IMR-90 (cell line): ENCODE measurements at regions of chr4 and their contacts with region 1.

Region 1: GRCh38 chr4:52199574-52200338 is 148.7 kb downstream of the SPATA18 start:
- DNase-seq: peak; percentile 7
- ATAC-seq: no peak
- H3K4me3 ChIP-seq: no peak overlapping the region
- H3K27ac ChIP-seq: no peak overlapping the region
- H3K4me1 ChIP-seq: no peaks in the 10 kb centered on the region
- H3K27me3 ChIP-seq: no peaks in the 10 kb centered on the region
- CTCF ChIP-seq: no peak
- POLR2A ChIP-seq: no peak
- RAD21 ChIP-seq: no peak

Region 2: DNA sequence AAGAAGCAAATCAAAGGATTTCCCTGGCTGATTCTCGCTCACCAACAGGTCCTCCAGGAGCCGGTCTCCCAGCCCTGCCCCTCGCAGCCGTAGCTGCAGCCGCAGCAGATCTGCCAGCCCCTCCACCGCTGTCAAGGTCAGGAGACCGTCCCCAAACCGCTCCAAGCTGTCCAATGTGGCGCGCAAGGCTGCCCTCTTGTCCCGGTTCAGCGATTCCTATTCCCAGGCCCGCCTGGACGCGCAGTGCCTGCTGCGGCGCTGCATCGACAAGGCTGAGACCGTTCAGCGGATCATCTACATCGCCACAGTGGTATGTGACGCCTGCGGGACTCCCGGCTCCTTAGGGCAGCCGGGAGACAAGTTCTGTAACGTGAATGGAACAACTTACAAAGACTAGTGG is 123.0 kb before region 1 on chr4:
- CTCF ChIA-PET with region 1: no interaction called
- POLR2A ChIA-PET with region 1: no interaction called
- dilution Hi-C with region 1: no loop called
- in situ Hi-C with region 1: loop called (anchors 25 kb)
- intact Hi-C with region 1: no loop called
- DNase-seq: no peak
- ATAC-seq: peak; percentile 89
- H3K4me3 ChIP-seq: no peak overlapping the region
- H3K27ac ChIP-seq: no peak overlapping the region
- H3K4me1 ChIP-seq: no peaks in the 10 kb centered on the region
- H3K27me3 ChIP-seq: peaks cover 7% of the 10 kb centered on the region; the same call in 1 of the 2 replicates
- CTCF ChIP-seq: no peak
- POLR2A ChIP-seq: no peak
- RAD21 ChIP-seq: no peak

Region 3: GRCh38 chr4:52143815-52144214 is 55.9 kb before region 1 on chr4:
- CTCF ChIA-PET with region 1: no interaction called
- POLR2A ChIA-PET with region 1: no interaction called
- dilution Hi-C with region 1: no loop called
- in situ Hi-C with region 1: no loop called
- intact Hi-C with region 1: loop called (anchors 10 kb)
- DNase-seq: no peak
- ATAC-seq: no peak
- H3K4me3 ChIP-seq: no peak overlapping the region
- H3K27ac ChIP-seq: no peak overlapping the region
- H3K4me1 ChIP-seq: no peaks in the 10 kb centered on the region
- H3K27me3 ChIP-seq: no peaks in the 10 kb centered on the region
- CTCF ChIP-seq: no peak
- POLR2A ChIP-seq: no peak
- RAD21 ChIP-seq: no peak